Transverse colon (tissue), 4 donors: ENCODE measurements at regions of chr2 and their contacts with region 1.

Region 1: DNA sequence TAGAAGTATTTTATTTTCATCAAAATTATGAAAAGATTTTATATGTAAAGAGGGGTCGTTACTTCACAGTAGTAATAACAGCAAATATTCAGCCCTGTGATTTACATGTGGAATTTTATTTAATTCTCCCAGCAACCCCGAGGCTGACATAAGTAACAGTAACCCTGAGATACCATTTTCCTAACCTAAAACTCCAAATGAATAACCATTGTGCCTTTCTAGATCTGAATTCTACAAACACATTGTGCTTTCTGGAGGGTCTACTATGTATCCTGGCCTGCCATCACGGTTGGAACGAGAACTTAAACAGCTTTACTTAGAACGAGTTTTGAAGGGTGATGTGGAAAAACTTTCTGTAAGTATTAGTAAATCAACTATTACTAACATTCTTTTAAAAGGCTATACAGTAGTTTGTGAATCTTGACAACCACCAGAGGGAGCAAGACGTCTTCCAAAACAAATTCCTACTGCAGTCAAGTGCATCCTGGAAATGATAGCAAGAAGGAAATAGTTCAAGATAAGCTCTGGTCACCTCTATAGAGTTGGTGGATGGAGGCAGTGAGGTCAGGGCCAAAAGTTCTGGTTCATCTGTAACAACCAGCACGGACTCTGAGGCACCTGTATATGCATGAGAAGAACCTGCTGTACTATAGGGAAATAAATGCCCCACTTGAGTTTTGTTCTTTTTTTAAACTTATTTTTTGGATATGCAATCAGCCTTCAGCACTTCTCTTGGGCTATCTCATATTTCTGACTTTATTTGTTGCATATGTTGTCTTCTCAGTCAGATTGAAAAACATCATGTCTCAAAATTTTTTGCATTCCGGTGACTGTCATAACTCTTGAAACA is 37.4 kb downstream of the ACTR2 start:
- DNase-seq: no peak
- H3K4me3 ChIP-seq: no peak overlapping the region
- H3K27ac ChIP-seq: no peak overlapping the region
- H3K4me1 ChIP-seq: peaks cover 0 to 7% (median 0%) of the 10 kb centered on the region in 4 donors
- H3K27me3 ChIP-seq: no peaks in the 10 kb centered on the region
- CTCF ChIP-seq: peak; percentile 59 to 76 (median 71)
- EP300 ChIP-seq: no peak
- POLR2A ChIP-seq: no peak

Region 2: GRCh38 chr2:65070172-65070830 is 194.7 kb before region 1 on chr2:
- in situ Hi-C with region 1: no loop called
- intact Hi-C with region 1: no loop called
- DNase-seq: peak; percentile 64
- H3K4me3 ChIP-seq: no peak overlapping the region
- H3K27ac ChIP-seq: peak overlapping the region; percentile 30 to 67 (median 49)
- H3K4me1 ChIP-seq: peaks cover 16 to 48% (median 22%) of the 10 kb centered on the region in 4 donors
- H3K27me3 ChIP-seq: no peaks in the 10 kb centered on the region
- CTCF ChIP-seq: peak in 4 of 5 experiments; percentile 19 to 42 (median 24)
- EP300 ChIP-seq: no peak
- POLR2A ChIP-seq: no peak

Region 3: DNA sequence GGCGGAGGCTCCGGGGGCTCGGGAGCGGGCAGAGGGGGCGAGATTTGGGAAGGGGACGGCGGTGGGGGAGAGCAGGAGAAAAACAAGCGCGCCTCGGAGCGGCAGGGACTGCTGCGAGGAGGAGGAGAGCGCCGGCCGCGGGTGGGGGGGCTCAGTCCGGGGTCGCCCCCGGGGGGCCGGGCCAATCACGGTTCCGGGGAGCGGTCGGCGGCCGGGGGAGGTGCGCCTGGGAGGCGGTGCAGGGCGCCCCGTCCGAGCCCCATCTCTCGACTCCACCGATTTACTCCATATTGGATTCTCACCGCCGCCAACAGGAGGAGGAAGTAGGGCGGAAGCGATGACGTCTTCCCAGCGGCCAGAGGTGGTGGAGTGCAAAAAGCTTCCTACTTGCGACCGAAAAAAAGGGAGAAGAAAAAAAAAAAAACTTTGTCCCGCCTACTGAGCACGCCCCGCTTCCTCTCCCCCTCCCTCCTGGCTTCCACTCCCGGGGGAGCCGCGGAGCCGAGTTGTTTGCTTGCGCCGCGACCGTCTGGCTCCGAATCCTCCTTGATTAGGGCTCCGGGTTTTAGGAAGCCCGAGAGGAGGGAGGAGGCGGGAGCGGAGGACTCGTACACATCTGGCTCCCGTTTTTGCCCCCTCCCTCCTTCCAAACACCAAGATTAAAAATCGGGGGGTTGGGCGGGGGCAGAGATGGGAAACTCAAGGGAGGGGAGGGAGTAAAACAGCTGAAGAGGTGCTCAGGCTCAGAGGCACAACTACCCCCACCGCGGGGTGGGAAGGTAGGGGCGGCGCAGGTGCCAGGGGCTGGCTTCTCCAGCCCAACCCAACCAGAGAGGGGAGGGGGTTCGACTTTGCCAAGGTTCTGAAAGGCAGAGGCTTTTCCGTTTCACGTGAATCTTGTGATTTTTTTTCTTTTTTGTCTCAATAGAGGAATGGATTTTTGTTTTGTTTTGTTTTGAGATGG is 167.5 kb after region 1 on chr2 and contains the start of gene SPRED2:
- in situ Hi-C with region 1: loop called in 2 of 4 experiments (anchors 25 kb)
- intact Hi-C with region 1: no loop called
- DNase-seq: peak; percentile 91
- H3K4me3 ChIP-seq: peak within 1 kb of the TSS; percentile 64 to 94 (median 77)
- H3K27ac ChIP-seq: peak within 1 kb of the TSS; percentile 90 to 98 (median 94)
- H3K4me1 ChIP-seq: peaks cover 3 to 37% (median 12%) of the 10 kb centered on the region in 4 donors
- H3K27me3 ChIP-seq: no peaks in the 10 kb centered on the region
- CTCF ChIP-seq: peak in 3 of 5 experiments; percentile 15 to 30 (median 22)
- EP300 ChIP-seq: no peak
- POLR2A ChIP-seq: peak; percentile 85
- total RNA-seq, gene SPRED2: 8.4 to 34.8 (median 29.7) TPM

Region 4: GRCh38 chr2:65545837-65546805 is 281.1 kb after region 1 on chr2:
- in situ Hi-C with region 1: loop called (anchors 5 to 10 kb)
- intact Hi-C with region 1: loop called (anchors 5 kb)
- DNase-seq: no peak
- H3K4me3 ChIP-seq: no peak overlapping the region
- H3K27ac ChIP-seq: peak overlapping the region in 1 of 4 donors; percentile 11
- H3K4me1 ChIP-seq: peaks cover 0 to 12% (median 0%) of the 10 kb centered on the region in 4 donors
- H3K27me3 ChIP-seq: no peaks in the 10 kb centered on the region
- CTCF ChIP-seq: no peak
- EP300 ChIP-seq: no peak
- POLR2A ChIP-seq: no peak

Region 5: GRCh38 chr2:65554765-65555591 is 289.9 kb after region 1 on chr2:
- in situ Hi-C with region 1: loop called in 3 of 4 experiments (anchors 5 to 10 kb)
- intact Hi-C with region 1: loop called (anchors 5 kb)
- DNase-seq: no peak
- H3K4me3 ChIP-seq: no peak overlapping the region
- H3K27ac ChIP-seq: no peak overlapping the region
- H3K4me1 ChIP-seq: peaks cover 0 to 5% (median 4%) of the 10 kb centered on the region in 4 donors
- H3K27me3 ChIP-seq: no peaks in the 10 kb centered on the region
- CTCF ChIP-seq: no peak
- EP300 ChIP-seq: no peak
- POLR2A ChIP-seq: no peak